ENCODE measurements at regions of chr2 and their contacts with region 1.

Region 1: GRCh38 chr2:44148999-44149398 is 19.7 kb upstream of the PPM1B start:
- DNase-seq: no peak
- H3K4me3 ChIP-seq: no peak overlapping the region
- H3K27ac ChIP-seq: no peak overlapping the region
- H3K4me1 ChIP-seq: no peaks in the 10 kb centered on the region
- H3K27me3 ChIP-seq: no peaks in the 10 kb centered on the region
- CTCF ChIP-seq: no peak

Region 2: GRCh38 chr2:44100351-44100750 is 48.6 kb before region 1 on chr2:
- CTCF ChIA-PET with region 1: no interaction called
- POLR2A ChIA-PET with region 1: no interaction called
- intact Hi-C with region 1: no loop called
- DNase-seq: peak; percentile 85 to 99
- H3K4me3 ChIP-seq: no peak overlapping the region
- H3K27ac ChIP-seq: peak overlapping the region; percentile 40
- H3K4me1 ChIP-seq: peaks cover 20% of the 10 kb centered on the region
- H3K27me3 ChIP-seq: no peaks in the 10 kb centered on the region
- CTCF ChIP-seq: no peak

Region 3: DNA sequence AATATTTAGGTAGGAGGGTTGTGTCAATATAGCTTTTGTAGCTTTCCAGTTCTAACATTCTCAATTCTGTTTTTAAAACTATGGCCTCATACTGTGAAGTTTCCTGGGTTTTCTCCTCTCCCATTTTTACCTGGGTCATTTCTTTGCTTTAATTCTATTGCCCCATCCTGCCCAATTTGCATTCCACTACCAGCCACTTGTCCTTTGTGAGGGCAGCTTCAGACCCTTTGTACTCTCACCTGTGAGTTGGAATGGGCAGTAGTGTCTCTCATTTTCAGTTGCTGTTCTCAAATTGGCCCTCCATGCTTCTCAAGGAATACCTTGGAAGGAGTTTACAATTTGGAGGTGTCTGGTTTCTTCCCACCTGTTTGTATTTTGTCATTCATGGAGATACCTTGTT is 321.2 kb after region 1 on chr2:
- CTCF ChIA-PET with region 1: no interaction called
- POLR2A ChIA-PET with region 1: interaction called, 16 read pairs
- intact Hi-C with region 1: no loop called
- DNase-seq: no peak
- H3K4me3 ChIP-seq: no peak overlapping the region
- H3K27ac ChIP-seq: no peak overlapping the region
- H3K4me1 ChIP-seq: no peaks in the 10 kb centered on the region
- H3K27me3 ChIP-seq: no peaks in the 10 kb centered on the region
- CTCF ChIP-seq: no peak

Region 4: DNA sequence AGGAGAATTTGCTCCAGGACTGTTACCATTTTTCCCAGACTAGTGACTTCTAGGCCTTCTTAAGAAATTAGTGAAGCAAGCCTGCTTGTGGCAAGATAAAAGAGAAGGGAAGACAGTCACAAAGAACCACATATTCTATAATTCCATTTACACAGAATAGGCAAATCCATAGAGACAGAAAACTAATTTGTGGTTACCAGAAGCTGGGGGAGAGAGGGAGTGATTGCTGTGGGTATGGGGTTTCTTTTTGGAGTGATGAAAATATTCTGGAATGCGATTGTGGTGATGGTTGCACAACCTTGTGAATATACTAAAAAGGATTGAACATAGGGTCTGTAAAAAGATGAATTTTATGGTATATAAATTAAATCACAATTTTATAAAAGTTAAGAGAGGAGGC is 897.8 kb after region 1 on chr2:
- CTCF ChIA-PET with region 1: no interaction called
- POLR2A ChIA-PET with region 1: no interaction called
- intact Hi-C with region 1: no loop called
- DNase-seq: no peak
- H3K4me3 ChIP-seq: no peak overlapping the region
- H3K27ac ChIP-seq: no peak overlapping the region
- H3K4me1 ChIP-seq: no peaks in the 10 kb centered on the region
- H3K27me3 ChIP-seq: no peaks in the 10 kb centered on the region
- CTCF ChIP-seq: no peak

Measured in PC-9 (cell line).